Right cardiac atrium (tissue), 5 donors: ENCODE measurements at regions of chr1 and their contacts with region 1.

Region 1: DNA sequence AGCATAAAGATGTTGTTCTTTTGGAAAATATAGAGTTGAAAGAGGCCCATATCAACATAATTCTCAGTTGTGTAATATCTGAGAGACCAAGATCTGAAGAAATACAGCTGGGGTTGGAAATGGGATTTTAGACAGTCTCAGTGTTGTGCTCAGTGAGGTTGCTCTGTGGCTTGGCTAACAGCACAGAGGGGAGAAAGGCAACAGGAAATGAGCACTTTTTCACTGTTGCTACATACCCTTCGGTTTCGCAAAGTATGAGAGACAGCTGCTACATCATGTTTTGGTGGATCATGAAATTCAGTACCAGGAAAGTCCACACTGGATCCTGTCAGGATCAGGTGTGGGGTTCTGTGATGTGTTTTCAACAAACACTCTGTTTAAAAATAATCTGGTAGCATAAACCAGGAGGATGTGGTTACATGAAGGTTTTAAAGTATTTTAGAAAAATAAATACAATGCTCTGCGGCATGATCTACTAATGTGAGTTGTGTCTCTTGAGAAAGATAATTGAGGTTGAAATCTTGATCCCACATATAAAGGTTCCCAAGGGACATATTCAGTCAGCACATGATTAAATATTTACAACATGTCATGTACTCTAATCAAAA is 7.0 kb upstream of the GPR88 start:
- DNase-seq: peak in 2 of 3 donors; percentile 52 to 54
- ATAC-seq: peak; percentile 94 to 95
- H3K4me3 ChIP-seq: no peak overlapping the region
- H3K27ac ChIP-seq: peak overlapping the region; percentile 31
- H3K4me1 ChIP-seq: no peaks in the 10 kb centered on the region
- H3K27me3 ChIP-seq: no peaks in the 10 kb centered on the region

Region 2: GRCh38 chr1:99728494-99729235 is 802.3 kb before region 1 on chr1:
- intact Hi-C with region 1: no loop called
- DNase-seq: peak in 1 of 3 donors; percentile 32
- ATAC-seq: peak; percentile 52 to 83
- H3K4me3 ChIP-seq: peak overlapping the region; percentile 37
- H3K27ac ChIP-seq: peak overlapping the region; percentile 87
- H3K4me1 ChIP-seq: peaks cover 5% of the 10 kb centered on the region
- H3K27me3 ChIP-seq: no peaks in the 10 kb centered on the region

Region 3: GRCh38 chr1:100767176-100767890 is 236.3 kb after region 1 on chr1:
- intact Hi-C with region 1: no loop called
- DNase-seq: no peak
- ATAC-seq: no peak
- H3K4me3 ChIP-seq: no peak overlapping the region
- H3K27ac ChIP-seq: no peak overlapping the region
- H3K4me1 ChIP-seq: no peaks in the 10 kb centered on the region
- H3K27me3 ChIP-seq: no peaks in the 10 kb centered on the region

Region 4: GRCh38 chr1:100866041-100866900 is 335.3 kb after region 1 on chr1:
- intact Hi-C with region 1: loop called in 1 of 4 experiments (anchors 10 kb)
- DNase-seq: no peak
- ATAC-seq: peak; percentile 72 to 76
- H3K4me3 ChIP-seq: no peak overlapping the region
- H3K27ac ChIP-seq: no peak overlapping the region
- H3K4me1 ChIP-seq: no peaks in the 10 kb centered on the region
- H3K27me3 ChIP-seq: no peaks in the 10 kb centered on the region